ENCODE measurements at regions of chr5 and their contacts with region 1.

Region 1: DNA sequence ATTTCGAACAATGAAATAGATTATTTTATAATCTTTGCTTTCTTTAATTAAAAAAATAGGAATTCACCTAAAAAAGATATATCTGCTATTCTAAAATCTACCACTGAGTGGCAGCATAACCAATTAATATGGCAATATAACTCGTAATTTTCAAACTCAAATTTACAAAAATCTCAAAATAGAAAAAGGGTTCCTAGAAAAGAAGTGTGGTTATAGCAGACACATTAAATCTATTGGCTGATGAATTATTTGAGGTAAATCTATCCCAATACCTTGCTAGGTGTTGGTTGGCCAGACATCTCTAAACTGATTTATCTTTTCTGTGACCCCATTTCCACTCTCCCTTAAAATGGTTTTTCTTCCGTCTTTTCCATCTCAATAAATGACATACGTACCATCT is 30.2 kb upstream of the NRG2 start:
- DNase-seq: peak; percentile 33
- H3K4me3 Mint-ChIP-seq: no peak overlapping the region
- H3K27ac Mint-ChIP-seq: no peak overlapping the region
- H3K4me1 Mint-ChIP-seq: no peaks in the 10 kb centered on the region
- H3K27me3 Mint-ChIP-seq: peaks cover 15% of the 10 kb centered on the region
- CTCF ChIP-seq: peak; percentile 64

Region 2: GRCh38 chr5:140042643-140043500 is 30.4 kb before region 1 on chr5 and contains the start of gene NRG2:
- CTCF ChIA-PET with region 1: interaction called, 11 read pairs
- POLR2A ChIA-PET with region 1: no interaction called
- intact Hi-C with region 1: no loop called
- DNase-seq: peak; percentile 63
- H3K4me3 Mint-ChIP-seq: peak within 1 kb of the TSS; percentile 69
- H3K27ac Mint-ChIP-seq: no peak within 1 kb of the TSS
- H3K4me1 Mint-ChIP-seq: peaks cover 32% of the 10 kb centered on the region
- H3K27me3 Mint-ChIP-seq: peaks cover 23% of the 10 kb centered on the region
- CTCF ChIP-seq: peak; percentile 57
- total RNA-seq, gene NRG2: 0.23 TPM in 1 of 2 replicates, not detected in the other

Region 3: DNA sequence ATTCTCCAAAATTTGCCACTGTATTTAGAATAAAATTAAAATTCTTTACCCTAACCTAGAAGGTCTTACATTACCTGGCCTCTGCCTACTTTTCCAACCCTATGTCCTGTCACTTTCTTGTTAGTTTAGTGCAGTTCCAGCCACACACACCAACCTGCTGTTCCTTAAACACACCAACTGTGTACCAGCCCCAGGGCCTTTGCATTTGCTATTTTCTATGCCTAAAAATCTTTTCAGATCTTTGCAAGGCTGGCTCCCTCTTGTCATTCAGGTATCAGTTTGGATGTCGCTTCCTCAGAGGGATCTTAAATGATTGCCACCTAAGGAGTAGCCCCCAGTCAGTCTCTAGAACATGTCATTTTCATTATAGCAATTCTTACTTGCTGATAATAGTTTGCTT is 12.5 kb before region 1 on chr5:
- CTCF ChIA-PET with region 1: interaction called, 10 read pairs
- POLR2A ChIA-PET with region 1: interaction called, 4 read pairs
- intact Hi-C with region 1: no loop called
- DNase-seq: no peak
- H3K4me3 Mint-ChIP-seq: no peak overlapping the region
- H3K27ac Mint-ChIP-seq: no peak overlapping the region
- H3K4me1 Mint-ChIP-seq: no peaks in the 10 kb centered on the region
- H3K27me3 Mint-ChIP-seq: peaks cover 24% of the 10 kb centered on the region
- CTCF ChIP-seq: no peak

Region 4: DNA sequence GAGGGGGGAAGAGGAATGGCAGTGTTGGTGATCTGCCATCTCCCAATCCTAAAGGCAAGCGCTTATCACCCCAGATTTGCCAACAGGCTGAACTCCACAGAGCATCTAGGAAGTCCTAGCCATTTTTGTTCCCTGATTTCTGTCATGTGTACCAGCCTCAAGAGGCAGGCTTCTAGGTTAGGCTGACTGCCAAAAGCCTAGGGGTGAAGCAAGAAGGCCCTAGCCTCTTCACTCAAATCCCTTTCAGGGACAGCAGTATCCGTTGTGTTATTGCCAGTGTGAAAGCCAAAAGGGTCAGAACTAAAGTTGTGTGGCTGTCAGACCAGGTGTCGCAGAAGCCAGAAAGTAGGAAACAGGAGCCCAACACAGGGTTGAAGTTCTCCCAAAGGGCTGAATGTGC is 67.1 kb after region 1 on chr5:
- CTCF ChIA-PET with region 1: interaction called, 109 read pairs
- POLR2A ChIA-PET with region 1: interaction called, 4 read pairs
- intact Hi-C with region 1: loop called (anchors 1 kb)
- DNase-seq: peak; percentile 43
- H3K4me3 Mint-ChIP-seq: no peak overlapping the region
- H3K27ac Mint-ChIP-seq: no peak overlapping the region
- H3K4me1 Mint-ChIP-seq: peaks cover 22% of the 10 kb centered on the region
- H3K27me3 Mint-ChIP-seq: no peaks in the 10 kb centered on the region
- CTCF ChIP-seq: no peak

Region 5: GRCh38 chr5:140151730-140152597 is 78.7 kb after region 1 on chr5:
- CTCF ChIA-PET with region 1: interaction called, 215 read pairs
- POLR2A ChIA-PET with region 1: interaction called, 8 read pairs
- intact Hi-C with region 1: loop called (anchors 1 kb)
- DNase-seq: no peak
- H3K4me3 Mint-ChIP-seq: no peak overlapping the region
- H3K27ac Mint-ChIP-seq: no peak overlapping the region
- H3K4me1 Mint-ChIP-seq: peaks cover 4% of the 10 kb centered on the region
- H3K27me3 Mint-ChIP-seq: no peaks in the 10 kb centered on the region
- CTCF ChIP-seq: no peak

Region 6: DNA sequence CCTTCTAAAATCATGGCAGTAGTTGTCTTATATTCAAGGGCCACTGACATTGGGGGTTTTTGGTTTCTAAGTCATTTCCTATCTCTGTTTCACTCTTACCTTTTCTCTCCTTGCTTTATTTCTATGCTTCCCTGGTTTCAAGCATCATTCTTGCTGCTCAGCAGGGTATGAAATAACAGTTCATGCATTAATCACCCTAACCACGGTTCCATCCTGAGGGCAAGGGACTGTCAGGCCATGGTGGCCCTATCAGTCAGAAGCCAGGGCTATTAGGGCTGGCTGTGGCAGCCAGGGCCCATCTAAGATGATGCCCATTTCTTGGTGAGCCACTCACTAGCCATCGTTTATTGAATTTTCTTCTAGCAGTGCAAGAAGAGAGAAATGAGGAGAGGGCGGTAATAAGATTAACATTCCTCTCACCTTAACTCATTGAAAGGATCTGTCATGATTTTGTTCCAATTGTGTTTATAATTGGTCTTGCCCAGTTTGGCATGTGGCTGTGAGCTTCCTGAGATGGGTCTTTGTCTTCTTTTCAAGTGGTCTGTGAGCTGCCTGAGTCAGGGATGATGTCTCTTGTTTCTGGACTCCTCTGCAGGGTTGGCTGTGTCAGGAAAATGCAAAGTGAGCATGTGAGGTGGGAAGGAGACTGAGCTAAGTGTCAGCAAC is 146.9 kb after region 1 on chr5:
- CTCF ChIA-PET with region 1: interaction called, 7 read pairs
- POLR2A ChIA-PET with region 1: interaction called, 3 read pairs
- intact Hi-C with region 1: loop called (anchors 5 kb)
- DNase-seq: no peak
- H3K4me3 Mint-ChIP-seq: no peak overlapping the region
- H3K27ac Mint-ChIP-seq: no peak overlapping the region
- H3K4me1 Mint-ChIP-seq: peaks cover 42% of the 10 kb centered on the region
- H3K27me3 Mint-ChIP-seq: no peaks in the 10 kb centered on the region
- CTCF ChIP-seq: no peak

Region 7: DNA sequence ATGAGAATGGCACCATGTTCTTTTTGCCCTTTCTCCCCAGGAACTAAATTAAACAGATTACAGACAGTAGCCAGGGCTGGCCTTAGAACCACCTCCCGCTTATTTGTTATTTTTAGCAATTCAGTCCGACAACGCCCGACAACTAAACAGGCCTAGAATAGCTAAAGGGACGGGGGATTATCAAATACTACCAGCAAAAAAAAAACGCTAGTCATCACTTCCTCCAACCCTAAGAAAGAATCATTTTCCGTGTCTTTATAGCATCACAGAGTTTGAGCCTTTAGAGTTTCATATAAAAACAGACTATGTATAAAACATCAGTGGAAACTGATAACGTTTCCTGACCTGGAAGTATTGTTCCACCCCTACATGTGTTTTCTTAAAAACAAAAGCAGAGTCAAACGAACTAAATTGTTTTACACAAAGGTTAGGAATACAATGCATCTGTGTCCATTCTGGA is 194.3 kb after region 1 on chr5:
- CTCF ChIA-PET with region 1: no interaction called
- POLR2A ChIA-PET with region 1: no interaction called
- intact Hi-C with region 1: no loop called
- DNase-seq: no peak
- H3K4me3 Mint-ChIP-seq: no peak overlapping the region
- H3K27ac Mint-ChIP-seq: no peak overlapping the region
- H3K4me1 Mint-ChIP-seq: peaks cover 11% of the 10 kb centered on the region
- H3K27me3 Mint-ChIP-seq: no peaks in the 10 kb centered on the region
- CTCF ChIP-seq: no peak

Region 8: DNA sequence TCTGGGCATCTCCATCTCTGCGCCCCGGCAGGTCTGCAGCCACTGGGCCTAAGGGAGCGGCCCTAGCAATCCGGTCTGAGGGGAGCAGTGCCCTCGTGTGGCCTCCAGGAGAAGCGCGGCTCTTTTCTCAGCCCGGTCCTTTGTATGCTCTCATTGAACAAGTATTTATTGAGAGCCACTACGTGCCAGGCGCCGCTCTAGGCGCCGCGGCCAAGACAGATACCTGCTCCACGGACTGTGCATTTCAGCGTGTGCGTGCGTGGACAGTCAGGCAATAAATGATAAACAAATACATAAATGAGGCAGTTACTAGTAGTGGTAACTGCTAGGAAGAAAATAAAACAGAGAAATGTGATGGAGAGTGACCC is 284.4 kb after region 1 on chr5:
- CTCF ChIA-PET with region 1: interaction called, 7 read pairs
- POLR2A ChIA-PET with region 1: no interaction called
- intact Hi-C with region 1: loop called (anchors 2 kb)
- DNase-seq: peak; percentile 91
- H3K4me3 Mint-ChIP-seq: peak overlapping the region; percentile 33
- H3K27ac Mint-ChIP-seq: no peak overlapping the region
- H3K4me1 Mint-ChIP-seq: peaks cover 8% of the 10 kb centered on the region
- H3K27me3 Mint-ChIP-seq: no peaks in the 10 kb centered on the region
- CTCF ChIP-seq: peak; percentile 97

Measured in MCF 10A (cell line).